Gastrocnemius medialis (tissue), 4 donors: ENCODE measurements at regions of chr2 and their contacts with region 1.

Region 1: DNA sequence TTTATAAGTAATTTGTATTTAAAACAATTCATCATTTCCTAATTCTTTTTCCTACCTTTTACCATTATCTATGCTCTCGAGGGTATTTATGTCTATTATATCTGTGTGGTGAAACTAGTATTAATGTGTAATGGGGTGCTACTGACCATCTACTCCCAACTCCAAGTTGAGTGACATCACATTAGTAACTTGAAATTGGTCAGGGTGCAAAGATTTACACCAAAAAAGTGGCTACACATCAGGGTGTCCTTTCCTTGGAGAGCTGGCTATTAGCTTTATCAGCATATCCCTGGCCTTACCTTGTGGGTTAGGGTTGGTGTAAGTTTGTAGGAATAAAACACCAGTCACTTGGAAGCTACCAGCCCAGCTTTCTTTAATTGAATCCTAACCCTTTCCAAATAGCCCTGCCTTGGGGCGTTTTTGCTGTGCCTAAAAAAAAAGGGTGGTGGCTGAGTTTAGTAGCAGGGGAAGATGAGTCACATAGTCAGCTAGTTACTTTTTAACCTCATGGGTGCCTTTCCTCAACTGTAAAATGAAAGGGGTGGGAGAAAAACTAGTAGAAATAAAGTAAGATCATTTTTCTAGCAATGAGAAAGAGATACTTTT is 14.0 kb downstream of the ANXA4 start:
- DNase-seq: no peak
- ATAC-seq: peak; percentile 77
- H3K4me3 ChIP-seq: no peak overlapping the region
- H3K27ac ChIP-seq: peak overlapping the region; percentile 7 to 57 (median 28)
- H3K4me1 ChIP-seq: peaks cover 0 to 14% of the 10 kb centered on the region in 2 donors
- H3K27me3 ChIP-seq: no peaks in the 10 kb centered on the region
- CTCF ChIP-seq: no peak
- POLR2A ChIP-seq: no peak

Region 2: GRCh38 chr2:69309351-69310110 is 446.4 kb before region 1 on chr2:
- in situ Hi-C with region 1: no loop called
- intact Hi-C with region 1: no loop called
- DNase-seq: no peak
- ATAC-seq: no peak
- H3K4me3 ChIP-seq: no peak overlapping the region
- H3K27ac ChIP-seq: peak overlapping the region in 3 of 4 donors; percentile 10 to 38 (median 35)
- H3K4me1 ChIP-seq: peaks cover 12 to 23% of the 10 kb centered on the region in 2 donors
- H3K27me3 ChIP-seq: peaks cover 13 to 27% (median 19%) of the 10 kb centered on the region in 3 donors
- CTCF ChIP-seq: no peak
- POLR2A ChIP-seq: no peak

Region 3: GRCh38 chr2:69796174-69796573 is 40.2 kb after region 1 on chr2:
- in situ Hi-C with region 1: no loop called
- intact Hi-C with region 1: loop called (anchors 1 kb)
- DNase-seq: no peak
- ATAC-seq: no peak
- H3K4me3 ChIP-seq: no peak overlapping the region
- H3K27ac ChIP-seq: no peak overlapping the region
- H3K4me1 ChIP-seq: peaks cover 10 to 18% of the 10 kb centered on the region in 2 donors
- H3K27me3 ChIP-seq: no peaks in the 10 kb centered on the region
- CTCF ChIP-seq: no peak
- POLR2A ChIP-seq: no peak